Activated naive CD8-positive, alpha-beta T cell treated with anti-CD3 and anti-CD28 coated beads, Interleukin-2, amount 10 ng/mL, durations not matched to agents 7 days and 5 days (primary cell): ENCODE measurements at regions of chr6 and their contacts with region 1.

Region 1: DNA sequence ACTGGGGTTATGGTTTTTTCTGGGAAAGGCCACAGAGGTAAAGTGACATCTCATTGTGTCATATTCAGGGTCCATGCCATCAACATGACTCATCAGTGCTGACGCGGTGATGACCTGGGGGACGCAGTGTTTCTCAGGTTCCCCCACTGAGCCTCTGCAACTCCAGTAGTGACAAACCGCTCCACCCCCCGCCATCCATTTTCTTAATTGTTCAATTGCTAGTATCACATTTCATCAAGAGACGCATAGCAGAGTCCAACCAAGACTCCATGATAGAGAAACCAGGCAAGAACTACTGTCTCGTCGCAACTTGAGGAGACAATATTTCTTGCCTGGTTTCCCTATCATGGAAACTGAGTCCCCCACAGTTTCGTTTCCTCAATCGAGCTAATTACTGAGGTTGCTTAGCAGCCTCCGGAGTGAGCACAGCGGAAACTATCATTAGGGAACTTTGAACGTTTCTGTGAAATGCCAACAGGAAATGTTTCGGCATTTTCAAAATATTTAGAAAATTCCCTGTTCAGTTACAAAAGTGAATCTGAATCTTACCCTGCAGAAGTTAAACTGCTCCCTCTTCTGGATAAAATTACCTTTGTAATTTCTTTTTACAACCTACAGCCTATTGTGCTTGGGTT is 12.2 kb upstream of the SERPINB1 start:
- DNase-seq: peak; percentile 67
- ATAC-seq: peak; percentile 46
- H3K4me3 Mint-ChIP-seq: peak overlapping the region; percentile 60
- H3K27ac Mint-ChIP-seq: peak overlapping the region; percentile 95
- H3K4me1 Mint-ChIP-seq: peaks cover 66% of the 10 kb centered on the region
- H3K27me3 Mint-ChIP-seq: no peaks in the 10 kb centered on the region

Region 2: DNA sequence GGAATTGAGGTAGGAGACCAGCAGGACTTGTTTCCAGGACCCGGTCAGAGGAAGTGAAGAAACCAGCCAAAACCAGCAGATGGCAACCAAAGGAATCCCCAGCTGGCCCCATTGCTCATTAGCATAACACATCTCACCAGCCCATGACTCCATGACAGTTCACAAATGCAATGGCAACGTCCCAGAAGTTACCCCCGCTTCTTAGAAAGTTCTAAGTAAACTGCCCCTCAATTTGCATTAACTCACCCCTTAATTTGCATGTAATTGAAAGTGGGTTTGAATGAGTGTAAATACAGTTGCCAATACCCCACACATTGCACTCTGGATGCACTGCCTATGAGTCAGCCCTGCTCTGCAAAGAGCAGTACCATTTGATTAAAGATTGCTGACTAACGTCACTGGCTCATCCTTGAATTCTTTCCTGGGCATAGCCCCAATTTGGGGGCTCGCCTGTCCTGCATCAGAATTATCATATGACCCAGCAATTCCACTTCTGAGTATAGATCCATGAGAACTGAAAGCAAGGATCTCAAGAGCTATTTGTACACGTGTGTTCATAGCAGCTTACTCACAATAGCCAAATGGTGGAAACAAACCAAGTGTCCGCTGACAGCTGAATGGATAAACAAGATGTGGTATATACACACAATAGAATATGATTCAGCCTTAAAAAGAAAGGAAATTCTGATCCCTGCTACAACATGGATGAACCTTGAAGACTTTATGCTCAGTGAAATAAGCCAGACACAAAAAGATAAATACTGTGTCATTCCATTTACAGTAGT is 139.6 kb before region 1 on chr6:
- POLR2A ChIA-PET with region 1: no interaction called
- DNase-seq: no peak
- ATAC-seq: no peak
- H3K4me3 Mint-ChIP-seq: no peak overlapping the region
- H3K27ac Mint-ChIP-seq: no peak overlapping the region
- H3K4me1 Mint-ChIP-seq: no peaks in the 10 kb centered on the region
- H3K27me3 Mint-ChIP-seq: peaks cover 3% of the 10 kb centered on the region

Region 3: GRCh38 chr6:2820415-2820814 is 33.5 kb before region 1 on chr6:
- POLR2A ChIA-PET with region 1: no interaction called
- DNase-seq: no peak
- ATAC-seq: no peak
- H3K4me3 Mint-ChIP-seq: no peak overlapping the region
- H3K27ac Mint-ChIP-seq: no peak overlapping the region
- H3K4me1 Mint-ChIP-seq: peaks cover 6% of the 10 kb centered on the region
- H3K27me3 Mint-ChIP-seq: peaks cover 1% of the 10 kb centered on the region

Region 4: DNA sequence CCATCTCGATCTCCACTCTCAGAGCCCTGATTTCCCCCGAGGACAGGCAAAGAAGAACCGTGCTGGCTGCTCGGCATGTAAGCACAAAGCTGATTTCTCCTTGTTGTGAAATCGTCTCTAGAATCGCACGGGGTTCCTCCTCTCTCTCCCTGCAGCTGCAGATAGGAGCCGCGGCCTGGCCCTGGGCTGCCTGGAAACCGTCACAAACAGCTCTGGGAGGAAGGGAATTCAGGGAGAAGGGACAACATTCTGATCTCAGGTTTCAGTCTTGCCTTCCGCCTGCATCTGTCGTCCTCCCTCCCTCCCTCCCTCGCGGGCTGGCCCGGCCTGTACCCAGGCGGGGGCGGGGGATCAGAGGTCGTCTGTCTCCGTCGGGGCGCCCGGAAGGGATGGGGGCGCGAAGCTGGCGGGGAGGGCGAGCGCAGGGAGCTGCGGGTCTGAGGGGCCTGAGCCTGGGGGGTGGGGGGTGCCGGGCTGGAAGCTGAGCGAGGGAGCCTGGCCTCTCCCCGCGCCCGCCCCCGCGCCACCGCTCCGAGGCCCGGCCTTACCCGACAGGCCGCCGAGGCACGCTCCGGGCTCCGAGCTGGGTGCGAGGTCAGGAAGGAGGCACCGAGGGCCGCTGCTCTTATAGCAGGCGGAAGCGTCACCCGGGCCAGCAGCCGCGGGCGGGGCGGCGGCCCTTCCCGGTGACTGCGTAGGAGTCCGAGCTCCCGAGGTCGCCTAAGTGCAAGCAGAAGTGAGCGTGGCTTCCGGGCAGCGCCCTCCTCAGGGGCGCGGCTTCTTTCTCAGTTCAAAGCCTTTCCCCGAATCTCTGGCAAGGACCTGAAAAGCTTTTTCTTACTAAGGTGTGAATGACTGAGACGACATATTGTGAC is 12.4 kb before region 1 on chr6 and contains the start of gene SERPINB1:
- POLR2A ChIA-PET with region 1: interaction called, 39 read pairs
- DNase-seq: peak; percentile 85
- ATAC-seq: peak; percentile 88
- H3K4me3 Mint-ChIP-seq: peak within 1 kb of the TSS; percentile 83
- H3K27ac Mint-ChIP-seq: peak within 1 kb of the TSS; percentile 87
- H3K4me1 Mint-ChIP-seq: peaks cover 38% of the 10 kb centered on the region
- H3K27me3 Mint-ChIP-seq: no peaks in the 10 kb centered on the region
- total RNA-seq, gene SERPINB1: 58.6 to 59.8 TPM

Region 5: GRCh38 chr6:2866181-2866846 is 12.4 kb after region 1 on chr6:
- POLR2A ChIA-PET with region 1: interaction called, 23 read pairs
- DNase-seq: no peak
- ATAC-seq: no peak
- H3K4me3 Mint-ChIP-seq: no peak overlapping the region
- H3K27ac Mint-ChIP-seq: no peak overlapping the region
- H3K4me1 Mint-ChIP-seq: peaks cover 39% of the 10 kb centered on the region
- H3K27me3 Mint-ChIP-seq: no peaks in the 10 kb centered on the region

Region 6: DNA sequence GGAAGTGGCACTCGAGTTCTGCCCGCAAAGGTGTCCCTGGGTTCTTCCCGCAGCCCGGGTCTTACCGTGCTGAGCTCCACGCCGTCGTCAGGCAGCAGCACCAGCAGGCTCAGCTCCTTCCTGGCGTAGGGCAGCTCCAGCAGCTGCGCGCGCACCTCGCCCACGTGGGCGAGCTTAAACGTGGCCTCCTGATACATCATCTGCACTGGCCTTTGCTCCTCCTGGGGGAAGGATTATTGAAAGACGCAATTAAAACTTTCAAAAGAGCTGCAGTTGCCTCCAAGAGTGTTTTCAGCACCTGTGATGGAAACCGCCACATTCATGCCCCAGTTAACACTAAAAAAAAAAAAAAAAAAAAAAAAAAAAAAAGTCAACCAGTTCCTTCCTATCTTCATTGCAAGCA is 37.9 kb after region 1 on chr6:
- POLR2A ChIA-PET with region 1: interaction called, 16 read pairs
- DNase-seq: peak; percentile 52
- ATAC-seq: peak; percentile 82
- H3K4me3 Mint-ChIP-seq: peak overlapping the region; percentile 20
- H3K27ac Mint-ChIP-seq: no peak overlapping the region
- H3K4me1 Mint-ChIP-seq: peaks cover 20% of the 10 kb centered on the region
- H3K27me3 Mint-ChIP-seq: no peaks in the 10 kb centered on the region

Region 7: DNA sequence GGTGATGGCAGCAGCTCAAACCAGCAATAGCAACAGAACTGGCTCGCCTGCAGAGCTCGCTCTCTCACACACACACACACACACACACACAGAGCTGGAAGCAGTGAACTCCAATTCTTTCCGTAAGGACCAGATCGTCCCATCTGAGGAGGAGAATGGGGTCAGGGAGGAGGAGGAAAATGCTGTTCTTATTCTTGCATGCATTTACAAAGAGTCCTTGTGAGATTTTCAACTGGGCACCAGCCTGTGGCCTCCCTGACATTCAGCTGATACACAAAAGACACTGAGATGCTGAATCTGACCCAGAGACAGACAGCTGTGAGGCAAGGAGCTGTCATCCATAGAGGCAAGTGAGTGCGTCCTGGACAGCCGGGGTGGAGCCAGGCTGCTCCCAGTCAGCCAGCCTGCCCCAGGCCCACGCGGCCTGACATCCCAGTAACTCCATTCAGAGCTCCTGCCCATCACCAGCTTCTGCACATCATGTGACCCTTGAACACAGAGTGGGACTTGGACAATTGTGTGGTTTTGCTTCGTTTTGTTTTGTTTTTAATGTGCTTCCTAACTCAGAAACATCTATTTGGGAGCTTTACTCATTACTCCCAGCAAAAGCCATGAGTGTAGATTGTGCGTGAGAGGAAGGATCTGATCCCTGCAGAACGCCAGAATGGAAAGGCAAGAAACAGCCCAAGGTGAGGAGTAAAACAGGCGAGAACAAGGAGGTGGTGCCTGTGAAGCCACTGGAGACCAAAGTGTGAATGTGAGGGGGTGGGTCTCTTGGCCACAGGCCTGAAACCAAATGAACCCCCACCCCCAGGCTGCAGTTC is 47.2 kb after region 1 on chr6:
- POLR2A ChIA-PET with region 1: interaction called, 20 read pairs
- DNase-seq: no peak
- ATAC-seq: no peak
- H3K4me3 Mint-ChIP-seq: peak overlapping the region; percentile 99
- H3K27ac Mint-ChIP-seq: peak overlapping the region; percentile 40
- H3K4me1 Mint-ChIP-seq: peaks cover 47% of the 10 kb centered on the region
- H3K27me3 Mint-ChIP-seq: peaks cover 2% of the 10 kb centered on the region

Region 8: DNA sequence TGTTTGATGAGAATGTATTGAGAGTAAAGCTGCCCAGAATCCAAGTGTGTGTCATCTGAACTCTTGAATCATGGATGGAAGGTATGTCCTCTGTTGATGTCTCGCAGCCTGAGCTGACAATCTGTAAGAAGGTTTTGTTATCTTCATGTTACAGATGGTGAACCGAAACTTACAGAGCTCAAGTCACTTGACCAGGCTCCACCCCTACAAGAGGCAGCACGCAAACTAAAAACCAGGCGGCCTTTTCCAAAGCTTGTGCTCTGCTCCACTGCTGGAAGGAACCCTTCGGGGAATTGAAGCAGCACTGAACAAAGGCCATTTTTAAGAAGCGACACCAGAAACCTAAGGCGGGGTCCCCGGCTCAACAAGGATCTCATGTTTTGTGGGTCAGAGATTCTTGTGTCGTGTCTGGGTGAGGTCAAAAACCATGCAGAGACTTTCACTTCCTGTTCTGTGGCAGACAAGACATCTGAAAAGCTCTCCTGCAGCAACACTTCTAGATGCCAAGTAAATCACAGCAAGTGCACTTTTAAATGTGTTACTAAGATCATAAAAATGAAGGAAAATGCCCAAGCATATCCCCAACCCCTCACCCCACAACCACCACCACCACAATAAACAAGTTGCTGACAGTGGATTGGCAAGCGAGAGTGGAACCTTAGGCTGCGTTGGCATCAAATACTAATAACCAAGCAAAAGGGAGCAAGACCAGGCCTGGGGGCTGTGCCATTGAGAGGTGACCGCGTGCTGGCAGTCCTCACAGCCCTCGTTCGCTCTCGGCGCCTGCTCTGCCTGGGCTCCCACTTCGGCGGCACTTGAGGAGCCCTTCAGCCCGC is 173.1 kb after region 1 on chr6:
- POLR2A ChIA-PET with region 1: no interaction called
- DNase-seq: peak; percentile 50
- ATAC-seq: peak; percentile 11
- H3K4me3 Mint-ChIP-seq: peak overlapping the region; percentile 75
- H3K27ac Mint-ChIP-seq: peak overlapping the region; percentile 88
- H3K4me1 Mint-ChIP-seq: peaks cover 39% of the 10 kb centered on the region
- H3K27me3 Mint-ChIP-seq: peaks cover 13% of the 10 kb centered on the region